T-cell (primary cell): ENCODE measurements at regions of chr12 and their contacts with region 1.

Region 1: DNA sequence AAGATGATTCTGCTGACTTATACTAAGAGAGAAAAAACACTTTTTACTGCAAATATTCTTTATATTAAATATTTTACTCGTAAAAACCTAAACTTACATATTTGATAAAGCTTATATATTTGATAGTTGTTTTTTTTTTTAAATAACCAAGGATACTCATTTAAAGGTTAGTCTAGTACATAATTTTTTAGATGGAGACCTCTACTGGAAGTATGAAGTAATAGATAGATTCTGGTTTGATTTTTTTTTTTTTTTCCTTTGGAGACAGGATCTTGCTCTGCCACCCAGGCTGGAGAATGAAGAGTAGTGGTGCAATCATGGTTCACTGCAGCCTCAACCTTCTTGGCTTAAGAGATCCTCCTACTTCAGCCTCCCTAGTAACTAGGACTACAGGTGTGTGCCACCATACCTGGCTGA is 16.4 kb downstream of the ARID2 start:
- DNase-seq: peak in 1 of 35 experiments; percentile 37
- ATAC-seq: peak in 3 of 4 experiments; percentile 59 to 78 (median 64)
- H3K4me3 ChIP-seq: no peak overlapping the region
- H3K4me3 Mint-ChIP-seq: no peak overlapping the region
- H3K27ac ChIP-seq: no peak overlapping the region
- H3K27ac Mint-ChIP-seq: no peak overlapping the region
- H3K4me1 ChIP-seq: peaks cover 11 to 16% of the 10 kb centered on the region in 2 experiments
- H3K4me1 Mint-ChIP-seq: peaks cover 65 to 82% (median 66%) of the 10 kb centered on the region in 3 donors
- H3K27me3 ChIP-seq: no peaks in the 10 kb centered on the region
- H3K27me3 Mint-ChIP-seq: no peaks in the 10 kb centered on the region

Region 2: GRCh38 chr12:45543906-45544315 is 202.0 kb before region 1 on chr12:
- CTCF ChIA-PET with region 1: interaction called, 4 to 23 read pairs
- POLR2A ChIA-PET with region 1: interaction called in 1 of 2 experiments, 3 read pairs
- DNase-seq: peak in 30 of 35 experiments; percentile 5 to 81 (median 34)
- ATAC-seq: peak; percentile 58 to 97 (median 76)
- H3K4me3 ChIP-seq: no peak overlapping the region
- H3K4me3 Mint-ChIP-seq: no peak overlapping the region
- H3K27ac ChIP-seq: no peak overlapping the region
- H3K27ac Mint-ChIP-seq: no peak overlapping the region
- H3K4me1 ChIP-seq: no peaks in the 10 kb centered on the region
- H3K4me1 Mint-ChIP-seq: no peaks in the 10 kb centered on the region
- H3K27me3 ChIP-seq: peaks cover 0 to 7% of the 10 kb centered on the region in 2 experiments
- H3K27me3 Mint-ChIP-seq: peaks cover 0 to 3% of the 10 kb centered on the region in 2 donors

Region 3: GRCh38 chr12:45655201-45655600 is 90.7 kb before region 1 on chr12:
- CTCF ChIA-PET with region 1: interaction called, 4 to 21 read pairs
- POLR2A ChIA-PET with region 1: interaction called in 1 of 2 experiments, 4 read pairs
- DNase-seq: peak; percentile 11 to 80 (median 67)
- ATAC-seq: peak; percentile 99 to 100 (median 100)
- H3K4me3 ChIP-seq: no peak overlapping the region
- H3K4me3 Mint-ChIP-seq: no peak overlapping the region
- H3K27ac ChIP-seq: no peak overlapping the region
- H3K27ac Mint-ChIP-seq: no peak overlapping the region
- H3K4me1 ChIP-seq: peaks cover 0 to 2% of the 10 kb centered on the region in 2 experiments
- H3K4me1 Mint-ChIP-seq: peaks cover 2 to 5% (median 5%) of the 10 kb centered on the region in 3 donors
- H3K27me3 ChIP-seq: peaks cover 0 to 6% of the 10 kb centered on the region in 2 experiments
- H3K27me3 Mint-ChIP-seq: peaks cover 0 to 10% of the 10 kb centered on the region in 2 donors

Region 4: DNA sequence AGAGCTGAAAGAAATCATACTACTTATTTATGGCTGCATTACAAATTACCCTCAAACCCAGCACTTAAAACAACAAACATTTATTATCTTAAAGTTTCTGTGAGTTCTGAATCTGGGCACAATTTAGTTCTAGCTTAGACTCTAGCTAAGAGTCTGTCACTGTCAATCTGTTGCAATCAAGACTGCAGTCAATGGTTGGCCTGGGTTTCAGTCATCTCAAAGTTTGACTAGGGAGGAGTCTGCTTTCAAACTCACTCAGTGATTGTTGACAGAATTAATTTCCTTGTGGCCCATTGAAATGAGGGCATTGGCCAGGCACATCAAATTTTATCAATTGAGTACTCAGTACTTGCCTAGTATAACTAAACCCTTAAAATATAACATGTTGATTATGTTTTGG is 35.2 kb after region 1 on chr12:
- CTCF ChIA-PET with region 1: no interaction called
- POLR2A ChIA-PET with region 1: no interaction called
- DNase-seq: no peak
- ATAC-seq: no peak
- H3K4me3 ChIP-seq: no peak overlapping the region
- H3K4me3 Mint-ChIP-seq: no peak overlapping the region
- H3K27ac ChIP-seq: no peak overlapping the region
- H3K27ac Mint-ChIP-seq: no peak overlapping the region
- H3K4me1 ChIP-seq: no peaks in the 10 kb centered on the region
- H3K4me1 Mint-ChIP-seq: peaks cover 15 to 23% (median 18%) of the 10 kb centered on the region in 3 donors
- H3K27me3 ChIP-seq: no peaks in the 10 kb centered on the region
- H3K27me3 Mint-ChIP-seq: no peaks in the 10 kb centered on the region